ENCODE measurements at regions of chrX and their contacts with region 1.

Region 1: GRCh38 chrX:109485470-109486340 is 3.8 kb upstream of the GUCY2F start:
- DNase-seq: peak; percentile 51 to 73 (median 64)
- ATAC-seq: peak; percentile 68
- H3K4me3 ChIP-seq: no peak overlapping the region
- H3K27ac ChIP-seq: no peak overlapping the region
- H3K4me1 ChIP-seq: no peaks in the 10 kb centered on the region
- H3K27me3 ChIP-seq: no peaks in the 10 kb centered on the region
- CTCF ChIP-seq: peak; percentile 91 to 99 (median 99)
- EP300 ChIP-seq: no peak
- POLR2A ChIP-seq: no peak
- RAD21 ChIP-seq: peak; percentile 79 to 82

Region 2: DNA sequence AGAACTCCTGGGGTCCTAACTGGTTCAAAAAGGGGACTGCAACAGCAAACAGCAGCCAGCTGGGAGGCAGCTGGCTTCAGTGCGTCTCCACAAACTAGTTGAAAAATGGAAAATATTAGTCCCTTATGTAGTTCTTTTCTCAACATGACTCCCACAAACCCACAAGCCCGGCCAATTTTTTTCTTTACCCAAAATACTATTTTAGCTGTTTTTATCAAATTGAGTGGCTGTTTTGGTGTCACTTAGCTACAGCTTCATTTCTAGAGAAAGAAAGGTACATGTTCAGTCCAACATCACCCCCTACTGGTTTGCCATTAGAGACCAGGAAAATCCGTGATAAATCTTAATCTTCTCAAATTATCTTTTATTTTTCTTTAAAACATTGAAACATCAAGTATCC is 101.0 kb before region 1 on chrX:
- CTCF ChIA-PET with region 1: no interaction called
- POLR2A ChIA-PET with region 1: no interaction called
- in situ Hi-C with region 1: no loop called
- intact Hi-C with region 1: no loop called
- DNase-seq: peak; percentile 5 to 20 (median 8)
- ATAC-seq: no peak
- H3K4me3 ChIP-seq: no peak overlapping the region
- H3K27ac ChIP-seq: no peak overlapping the region
- H3K4me1 ChIP-seq: no peaks in the 10 kb centered on the region
- H3K27me3 ChIP-seq: no peaks in the 10 kb centered on the region
- CTCF ChIP-seq: peak; percentile 19 to 63 (median 37); a peak in 4 of 6 replicates
- EP300 ChIP-seq: no peak
- POLR2A ChIP-seq: no peak
- RAD21 ChIP-seq: peak; percentile 39 to 51; a peak in 3 of 4 replicates

Region 3: DNA sequence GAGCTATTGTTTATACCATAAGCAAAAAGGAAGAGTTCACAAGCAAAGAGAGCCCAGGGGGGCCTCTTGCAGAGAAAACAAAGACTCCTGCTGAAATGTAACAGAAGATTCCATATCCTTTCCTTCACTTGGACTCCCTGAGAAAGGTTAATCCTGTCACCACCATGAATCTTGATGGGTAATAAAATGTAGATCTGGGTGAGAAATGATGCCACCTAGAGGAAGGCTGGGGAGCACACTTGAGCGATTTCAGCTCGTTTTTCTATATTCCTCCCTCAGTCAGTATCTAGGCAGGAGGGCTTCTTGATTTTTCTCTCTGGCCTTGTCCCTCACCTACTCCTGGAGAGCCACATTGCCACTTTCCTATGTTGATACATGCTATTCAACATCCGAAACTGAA is 149.5 kb after region 1 on chrX:
- CTCF ChIA-PET with region 1: interaction called, 29 read pairs
- POLR2A ChIA-PET with region 1: no interaction called
- in situ Hi-C with region 1: loop called (anchors 10 kb)
- intact Hi-C with region 1: loop called (anchors 1 kb)
- DNase-seq: peak; percentile 20 to 34 (median 24)
- ATAC-seq: peak; percentile 85
- H3K4me3 ChIP-seq: no peak overlapping the region
- H3K27ac ChIP-seq: no peak overlapping the region
- H3K4me1 ChIP-seq: no peaks in the 10 kb centered on the region
- H3K27me3 ChIP-seq: no peaks in the 10 kb centered on the region
- CTCF ChIP-seq: peak; percentile 51 to 64 (median 57); a peak in 5 of 6 replicates
- EP300 ChIP-seq: no peak
- POLR2A ChIP-seq: no peak
- RAD21 ChIP-seq: no peak